B cell (primary cell): ENCODE measurements at regions of chr7 and their contacts with region 1.

Region 1: DNA sequence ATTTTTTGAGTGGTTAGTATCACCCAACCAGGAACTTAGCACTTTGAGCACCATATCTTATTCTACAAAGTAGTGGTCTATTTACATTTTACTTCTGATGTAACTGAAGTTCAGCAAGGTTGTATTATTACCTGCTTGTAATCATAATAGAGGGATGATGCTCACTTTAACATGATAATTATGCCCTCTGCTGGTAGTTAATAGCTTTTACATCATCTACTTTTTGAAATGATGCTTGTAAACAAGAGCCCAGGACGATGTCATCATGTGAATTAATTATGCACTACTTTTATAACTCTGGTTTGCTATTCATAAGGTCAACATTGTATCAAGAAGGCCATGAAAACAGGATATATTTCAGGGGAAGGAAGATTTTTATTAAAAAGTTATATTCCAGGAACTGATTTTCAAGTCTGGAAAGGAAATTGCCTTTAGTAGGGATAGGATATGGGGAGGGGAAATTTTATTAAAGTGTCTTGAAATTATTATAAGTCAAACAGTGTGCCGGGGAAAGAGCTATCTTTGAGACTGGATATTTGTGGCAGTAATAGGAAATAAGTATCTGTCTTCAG is 80.3 kb upstream of the SCIN start:
- DNase-seq: peak; percentile 19
- ATAC-seq: peak; percentile 24
- H3K4me3 ChIP-seq: no peak overlapping the region
- H3K4me3 Mint-ChIP-seq: no peak overlapping the region
- H3K27ac ChIP-seq: no peak overlapping the region
- H3K27ac Mint-ChIP-seq: no peak overlapping the region
- H3K4me1 ChIP-seq: no peaks in the 10 kb centered on the region
- H3K4me1 Mint-ChIP-seq: no peaks in the 10 kb centered on the region
- H3K27me3 ChIP-seq: no peaks in the 10 kb centered on the region
- H3K27me3 Mint-ChIP-seq: no peaks in the 10 kb centered on the region
- CTCF ChIP-seq: peak; percentile 64

Region 2: DNA sequence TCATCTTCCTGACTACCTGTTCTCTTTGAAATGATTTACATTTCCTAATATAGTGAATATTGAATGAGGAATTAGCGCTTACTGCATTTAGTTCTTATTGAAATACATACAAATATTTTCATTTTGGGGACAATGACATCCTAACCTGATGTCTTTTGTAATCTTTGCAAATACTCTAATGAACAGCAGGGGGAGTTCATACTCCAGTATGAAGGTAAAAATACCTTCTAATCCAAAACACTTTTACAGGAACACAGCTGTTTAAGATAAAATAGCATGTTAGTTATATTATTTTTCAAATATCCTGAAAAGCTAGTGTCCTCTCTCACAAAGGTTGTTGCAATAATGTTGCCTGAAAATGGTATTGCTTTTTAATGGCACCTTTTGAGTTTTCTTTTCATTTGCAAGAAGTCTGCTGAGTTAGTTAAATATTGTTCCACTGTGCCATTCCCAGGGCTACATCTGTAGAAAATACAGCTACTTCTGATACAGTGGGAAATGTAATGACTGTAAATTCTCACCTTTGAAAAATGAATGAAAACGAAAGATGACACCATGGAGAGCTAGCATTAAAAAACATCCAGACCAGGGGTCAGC is 1116.6 kb before region 1 on chr7:
- CTCF ChIA-PET with region 1: no interaction called
- POLR2A ChIA-PET with region 1: no interaction called
- intact Hi-C with region 1: loop called (anchors 5 kb)
- DNase-seq: no peak
- ATAC-seq: no peak
- H3K4me3 ChIP-seq: no peak overlapping the region
- H3K4me3 Mint-ChIP-seq: no peak overlapping the region
- H3K27ac ChIP-seq: no peak overlapping the region
- H3K27ac Mint-ChIP-seq: no peak overlapping the region
- H3K4me1 ChIP-seq: no peaks in the 10 kb centered on the region
- H3K4me1 Mint-ChIP-seq: no peaks in the 10 kb centered on the region
- H3K27me3 ChIP-seq: no peaks in the 10 kb centered on the region
- H3K27me3 Mint-ChIP-seq: no peaks in the 10 kb centered on the region
- CTCF ChIP-seq: peak; percentile 59

Region 3: DNA sequence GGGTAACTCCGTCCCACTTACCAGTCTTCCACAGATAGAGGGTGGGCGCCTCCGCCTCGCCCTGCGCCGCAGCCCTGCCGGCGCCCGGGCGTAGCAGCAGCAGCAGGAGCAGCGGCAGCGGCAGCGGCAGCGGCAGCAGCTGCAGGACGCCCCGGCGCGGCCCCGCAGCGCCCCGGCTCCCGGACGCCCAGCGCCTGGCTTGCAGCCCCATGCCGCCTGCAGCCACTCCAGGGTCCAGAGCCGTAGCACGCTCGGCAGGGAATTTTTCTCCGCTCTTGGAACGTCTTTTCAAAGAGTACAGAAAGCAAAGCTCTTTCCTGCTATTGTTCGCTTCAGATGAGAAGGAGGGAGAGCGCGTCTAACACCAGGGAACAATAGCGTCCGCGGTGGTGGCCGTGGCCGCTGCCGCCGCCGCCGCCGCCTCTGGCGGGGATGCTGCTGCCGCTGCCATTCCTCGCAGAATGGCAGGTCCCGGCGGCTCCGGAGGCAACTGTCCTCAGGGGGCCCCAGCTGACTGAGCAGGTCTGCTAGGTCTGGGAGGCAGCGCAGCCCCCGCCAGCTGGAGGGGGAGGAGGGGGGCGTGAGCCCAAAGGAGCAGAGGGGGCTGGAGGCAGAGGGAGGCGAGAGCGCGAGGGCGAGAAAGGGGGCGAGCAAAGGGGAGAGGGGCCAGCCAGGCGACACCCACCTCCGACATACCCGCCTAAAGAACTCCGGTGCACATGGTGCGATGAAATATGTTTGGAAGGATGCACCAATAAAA is 658.3 kb before region 1 on chr7 and contains the start of gene THSD7A:
- CTCF ChIA-PET with region 1: no interaction called
- POLR2A ChIA-PET with region 1: no interaction called
- intact Hi-C with region 1: loop called (anchors 10 kb)
- DNase-seq: peak; percentile 6
- ATAC-seq: no peak
- H3K4me3 ChIP-seq: peak within 1 kb of the TSS in 3 of 5 experiments; percentile 3 to 61 (median 29)
- H3K4me3 Mint-ChIP-seq: no peak within 1 kb of the TSS
- H3K27ac ChIP-seq: no peak within 1 kb of the TSS
- H3K27ac Mint-ChIP-seq: no peak within 1 kb of the TSS
- H3K4me1 ChIP-seq: peaks cover 11 to 12% of the 10 kb centered on the region in 2 donors
- H3K4me1 Mint-ChIP-seq: peaks cover 8% of the 10 kb centered on the region
- H3K27me3 ChIP-seq: peaks cover 0 to 19% (median 11%) of the 10 kb centered on the region in 4 experiments
- H3K27me3 Mint-ChIP-seq: peaks cover 37% of the 10 kb centered on the region
- CTCF ChIP-seq: no peak
- total RNA-seq, gene THSD7A: not detected in 2 replicates

Region 4: DNA sequence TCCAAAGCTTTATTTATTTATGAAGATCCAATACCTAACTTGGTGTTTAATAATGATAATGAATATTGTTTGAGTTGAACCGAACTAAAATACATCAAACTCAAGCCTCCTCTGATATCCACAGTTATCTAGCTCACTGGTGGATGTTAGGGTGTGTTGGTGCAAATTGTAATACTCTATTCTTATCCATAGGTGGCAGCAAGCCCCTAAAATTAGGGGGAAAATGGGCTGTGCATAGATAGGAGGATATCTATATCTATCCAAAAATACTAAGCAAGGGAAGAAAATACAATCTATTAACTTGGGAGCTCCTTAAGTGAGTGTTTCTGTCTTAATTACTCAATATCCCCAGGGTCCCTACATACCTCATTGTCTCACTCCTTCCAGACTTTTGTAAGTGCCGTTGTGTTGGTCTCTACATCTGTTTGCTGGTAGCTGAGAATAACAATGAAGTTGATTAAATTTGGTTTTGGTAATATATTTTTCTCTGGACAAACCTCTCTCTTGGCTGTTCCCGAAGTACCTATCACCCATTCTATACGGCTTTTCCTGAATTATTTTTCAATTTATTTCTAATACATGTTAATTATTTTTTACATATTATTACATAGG is 31.6 kb before region 1 on chr7:
- CTCF ChIA-PET with region 1: interaction called, 13 read pairs
- POLR2A ChIA-PET with region 1: no interaction called
- intact Hi-C with region 1: no loop called
- DNase-seq: peak; percentile 5
- ATAC-seq: no peak
- H3K4me3 ChIP-seq: no peak overlapping the region
- H3K4me3 Mint-ChIP-seq: no peak overlapping the region
- H3K27ac ChIP-seq: no peak overlapping the region
- H3K27ac Mint-ChIP-seq: no peak overlapping the region
- H3K4me1 ChIP-seq: no peaks in the 10 kb centered on the region
- H3K4me1 Mint-ChIP-seq: no peaks in the 10 kb centered on the region
- H3K27me3 ChIP-seq: no peaks in the 10 kb centered on the region
- H3K27me3 Mint-ChIP-seq: peaks cover 4% of the 10 kb centered on the region
- CTCF ChIP-seq: peak; percentile 61

Region 5: GRCh38 chr7:12504149-12504548 is 13.9 kb after region 1 on chr7:
- CTCF ChIA-PET with region 1: no interaction called
- POLR2A ChIA-PET with region 1: no interaction called
- intact Hi-C with region 1: no loop called
- DNase-seq: no peak
- ATAC-seq: no peak
- H3K4me3 ChIP-seq: no peak overlapping the region
- H3K4me3 Mint-ChIP-seq: no peak overlapping the region
- H3K27ac ChIP-seq: no peak overlapping the region
- H3K27ac Mint-ChIP-seq: no peak overlapping the region
- H3K4me1 ChIP-seq: no peaks in the 10 kb centered on the region
- H3K4me1 Mint-ChIP-seq: no peaks in the 10 kb centered on the region
- H3K27me3 ChIP-seq: no peaks in the 10 kb centered on the region
- H3K27me3 Mint-ChIP-seq: no peaks in the 10 kb centered on the region
- CTCF ChIP-seq: no peak